Pancreas (tissue), 10 donors: ENCODE measurements at regions of chr9 and their contacts with region 1.

Region 1: GRCh38 chr9:75200892-75201470 is 112.7 kb downstream of the OSTF1 start:
- DNase-seq: no peak
- ATAC-seq: peak in 3 of 4 donors; percentile 38 to 46 (median 46)
- H3K4me3 ChIP-seq: no peak overlapping the region
- H3K27ac ChIP-seq: no peak overlapping the region
- H3K4me1 ChIP-seq: no peaks in the 10 kb centered on the region
- H3K27me3 ChIP-seq: no peaks in the 10 kb centered on the region
- CTCF ChIP-seq: peak; percentile 29 to 67 (median 42)

Region 2: GRCh38 chr9:75242426-75242825 is 41.4 kb after region 1 on chr9:
- intact Hi-C with region 1: loop called in 1 of 3 experiments (anchors 10 kb)
- DNase-seq: no peak
- ATAC-seq: no peak
- H3K4me3 ChIP-seq: no peak overlapping the region
- H3K27ac ChIP-seq: no peak overlapping the region
- H3K4me1 ChIP-seq: no peaks in the 10 kb centered on the region
- H3K27me3 ChIP-seq: no peaks in the 10 kb centered on the region
- CTCF ChIP-seq: no peak

Region 3: GRCh38 chr9:76297721-76298239 is 1096.8 kb after region 1 on chr9:
- intact Hi-C with region 1: loop called in 1 of 3 experiments (anchors 10 kb)
- DNase-seq: no peak
- ATAC-seq: peak in 3 of 4 donors; percentile 57 to 73 (median 67)
- H3K4me3 ChIP-seq: no peak overlapping the region
- H3K27ac ChIP-seq: no peak overlapping the region
- H3K4me1 ChIP-seq: peaks cover 0 to 3% (median 0%) of the 10 kb centered on the region in 3 donors
- H3K27me3 ChIP-seq: no peaks in the 10 kb centered on the region
- CTCF ChIP-seq: no peak